ENCODE measurements at regions of chr16 and their contacts with region 1.

Region 1: DNA sequence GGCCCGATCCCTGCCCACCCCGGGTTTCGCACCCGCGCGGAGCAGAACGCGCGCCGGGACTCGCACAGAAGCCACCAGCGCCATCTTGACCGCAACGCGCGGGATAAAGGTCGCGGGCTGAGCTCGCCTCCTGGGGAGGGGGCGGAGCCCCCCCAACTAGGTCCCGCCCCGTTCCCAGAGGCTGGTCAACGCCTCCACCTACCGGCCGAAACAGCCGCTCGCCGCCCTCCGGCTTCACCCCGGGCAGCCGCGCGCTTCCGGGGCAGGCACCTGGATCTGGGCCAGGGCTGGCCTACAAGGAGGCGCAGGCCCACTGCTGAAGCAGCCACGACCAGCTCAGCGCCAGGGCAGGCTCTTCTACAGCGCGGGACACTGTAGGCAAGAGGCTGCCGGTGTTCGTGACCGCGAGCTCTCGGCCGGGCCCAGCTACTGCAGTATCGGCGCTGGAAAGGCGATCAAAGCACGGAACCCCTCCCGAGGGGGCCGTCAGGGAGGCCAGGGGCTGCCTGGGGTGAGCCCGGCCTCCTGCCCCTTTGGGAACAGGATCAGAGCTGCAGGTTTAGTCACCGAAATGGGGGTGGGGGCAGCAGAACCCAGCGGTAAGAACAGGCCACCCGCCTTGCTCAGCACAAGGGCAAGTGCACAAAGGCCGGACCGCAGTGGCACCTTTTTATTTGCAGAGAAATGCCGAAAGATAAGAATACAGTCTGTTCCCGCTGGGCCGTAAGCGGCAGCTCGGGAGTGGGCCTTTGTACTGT is at the start of gene ECI1:
- DNase-seq: peak; percentile 100
- CTCF ChIP-seq: peak; percentile 64

Region 2: GRCh38 chr16:1272574-1273113 is 979.0 kb before region 1 on chr16:
- CTCF ChIA-PET with region 1: no interaction called
- POLR2A ChIA-PET with region 1: no interaction called
- DNase-seq: no peak
- CTCF ChIP-seq: no peak

Region 3: DNA sequence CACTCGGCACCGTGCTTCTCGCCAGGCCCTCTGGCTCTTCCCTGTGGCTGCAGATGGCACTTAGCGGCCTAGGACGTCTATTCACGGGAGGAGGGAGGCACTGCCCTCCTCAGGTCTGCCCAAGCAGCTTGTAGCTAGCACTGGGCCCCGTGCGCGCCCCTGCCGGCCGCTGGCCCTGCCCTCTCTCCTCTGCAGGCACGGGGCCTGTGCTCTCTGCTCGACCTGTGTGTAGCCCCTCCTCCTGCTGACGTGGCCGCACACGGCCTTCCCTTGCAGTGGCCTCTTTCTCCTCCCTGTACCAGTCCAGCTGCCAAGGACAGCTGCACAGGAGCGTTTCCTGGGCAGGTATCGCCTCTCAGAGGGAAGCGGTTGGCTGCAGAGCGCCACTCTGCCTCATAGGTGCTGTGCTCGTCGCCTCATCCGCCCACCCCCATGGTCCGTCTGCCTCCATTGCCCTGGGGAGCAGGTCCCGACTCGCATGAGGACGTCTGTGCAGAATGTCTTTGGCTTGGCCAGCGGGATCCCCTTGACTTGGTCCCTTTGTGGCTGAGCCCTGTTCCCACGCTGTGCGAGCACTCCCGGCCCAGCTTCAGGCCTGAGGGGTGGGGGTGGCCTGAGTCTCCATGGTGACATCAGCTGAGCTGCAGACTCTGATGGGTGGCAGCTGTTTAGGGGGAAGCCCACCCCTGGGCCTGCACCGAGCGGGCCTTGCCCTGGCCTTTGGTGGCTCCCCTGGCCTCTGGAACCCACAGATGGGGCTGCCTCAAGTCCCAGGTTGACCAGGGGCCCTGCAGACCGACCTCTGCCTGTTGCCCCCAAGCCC is 169.3 kb before region 1 on chr16:
- CTCF ChIA-PET with region 1: no interaction called
- POLR2A ChIA-PET with region 1: no interaction called
- DNase-seq: no peak
- CTCF ChIP-seq: no peak

Region 4: DNA sequence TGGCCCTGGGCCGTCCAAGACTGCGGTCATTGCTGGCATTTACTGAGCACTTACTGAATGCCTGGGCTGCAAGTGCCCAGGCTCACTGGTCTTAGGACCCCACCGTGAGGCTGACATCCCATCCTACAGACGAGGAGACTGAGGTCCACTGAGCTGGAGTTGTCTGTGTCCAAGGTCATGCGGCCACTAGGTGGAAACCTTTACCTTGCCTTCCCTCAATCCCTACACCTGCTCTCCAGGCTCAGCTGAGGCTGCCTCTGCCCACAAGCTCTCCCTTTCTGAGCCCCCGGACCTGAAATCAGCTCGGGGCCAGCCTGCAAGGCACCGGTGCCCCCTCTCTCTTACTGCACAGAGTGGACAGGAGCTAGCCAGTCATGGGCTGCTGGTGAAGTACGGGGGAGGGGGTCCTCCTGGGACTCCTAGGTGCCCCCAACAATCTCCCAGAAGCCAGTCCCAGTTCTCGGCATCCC is 56.8 kb before region 1 on chr16:
- CTCF ChIA-PET with region 1: interaction called, 16 read pairs
- POLR2A ChIA-PET with region 1: no interaction called
- DNase-seq: peak; percentile 75
- CTCF ChIP-seq: peak; percentile 55

Region 5: GRCh38 chr16:2267913-2268666 is 16.4 kb after region 1 on chr16 and contains the start of gene RNPS1:
- CTCF ChIA-PET with region 1: interaction called, 33 read pairs
- POLR2A ChIA-PET with region 1: interaction called, 11 read pairs
- DNase-seq: peak; percentile 100
- CTCF ChIP-seq: no peak

Region 6: GRCh38 chr16:2287916-2288547 is 36.4 kb after region 1 on chr16:
- CTCF ChIA-PET with region 1: no interaction called
- POLR2A ChIA-PET with region 1: no interaction called
- DNase-seq: no peak
- CTCF ChIP-seq: no peak